ENCODE measurements at regions of chr9 and their contacts with region 1.

Region 1: GRCh38 chr9:110270211-110270995 is 14.1 kb upstream of the TXN start:
- DNase-seq: no peak
- ATAC-seq: no peak
- H3K4me3 ChIP-seq: no peak overlapping the region
- H3K27ac ChIP-seq: no peak overlapping the region
- H3K4me1 ChIP-seq: no peaks in the 10 kb centered on the region; a peak in 1 of 5 replicates
- H3K27me3 ChIP-seq: no peaks in the 10 kb centered on the region; a peak in 1 of 5 replicates
- CTCF ChIP-seq: no peak
- EP300 ChIP-seq: no peak
- POLR2A ChIP-seq: no peak
- RAD21 ChIP-seq: no peak

Region 2: DNA sequence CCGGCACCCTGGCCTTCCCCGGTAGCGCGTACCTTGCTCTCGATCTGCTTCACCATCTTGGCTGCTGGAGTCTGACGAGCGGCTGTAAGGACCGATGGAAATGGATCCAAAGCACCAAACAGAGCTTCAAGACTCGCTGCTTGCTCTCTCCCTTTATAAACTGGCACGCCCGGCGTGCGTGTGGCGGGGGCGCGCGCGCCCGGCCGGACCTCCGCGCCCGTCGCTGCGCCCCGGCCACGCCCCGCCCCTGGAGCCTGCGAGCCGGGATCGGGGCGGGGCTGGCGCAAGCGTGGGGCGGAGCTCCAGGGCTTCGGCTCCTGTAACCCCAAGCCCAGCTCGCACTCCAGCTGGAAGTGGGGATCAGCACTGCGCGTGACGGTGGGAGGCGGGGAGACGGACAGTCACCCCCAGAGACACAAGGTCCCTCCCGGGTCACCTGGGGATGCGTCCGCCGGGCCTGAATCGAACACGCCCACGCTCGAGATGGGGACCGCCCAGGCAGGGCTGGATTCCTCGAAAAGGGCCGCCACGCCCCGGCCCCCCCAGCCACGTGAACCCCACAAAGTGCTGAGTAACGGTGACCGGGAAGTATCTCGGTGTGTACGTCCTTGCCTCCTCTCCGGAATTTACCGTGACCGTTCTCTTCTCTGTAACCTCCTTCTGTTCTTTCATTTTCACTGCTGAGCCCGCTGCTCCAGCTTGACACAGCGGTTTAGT is 13.9 kb before region 1 on chr9 and contains the start of gene TXN:
- CTCF ChIA-PET with region 1: no interaction called
- POLR2A ChIA-PET with region 1: interaction called, 94 read pairs
- in situ Hi-C with region 1: no loop called
- intact Hi-C with region 1: no loop called
- DNase-seq: peak; percentile 91 to 97 (median 93)
- ATAC-seq: peak; percentile 86
- H3K4me3 ChIP-seq: peak within 1 kb of the TSS; percentile 91
- H3K27ac ChIP-seq: peak within 1 kb of the TSS; percentile 97
- H3K4me1 ChIP-seq: peaks cover 15 to 39% of the 10 kb centered on the region in 2 experiments
- H3K27me3 ChIP-seq: no peaks in the 10 kb centered on the region
- CTCF ChIP-seq: no peak
- EP300 ChIP-seq: peak; percentile 82
- POLR2A ChIP-seq: peak; percentile 78
- RAD21 ChIP-seq: no peak
- polyA plus RNA-seq, gene TXN: 1,469 to 1,596 TPM